MCF 10A (cell line): ENCODE measurements at regions of chr15 and their contacts with region 1.

Region 1: GRCh38 chr15:35000511-35000910 is 12.4 kb upstream of the ZNF770 start:
- DNase-seq: peak; percentile 99
- H3K4me3 Mint-ChIP-seq: peak overlapping the region; percentile 43
- H3K27ac Mint-ChIP-seq: peak overlapping the region; percentile 85
- H3K4me1 Mint-ChIP-seq: peaks cover 4% of the 10 kb centered on the region
- H3K27me3 Mint-ChIP-seq: no peaks in the 10 kb centered on the region
- CTCF ChIP-seq: no peak

Region 2: GRCh38 chr15:34969340-34970097 is 31.0 kb before region 1 on chr15 and contains the start of gene AQR:
- CTCF ChIA-PET with region 1: interaction called, 7 read pairs
- POLR2A ChIA-PET with region 1: interaction called, 14 read pairs
- intact Hi-C with region 1: no loop called
- DNase-seq: peak; percentile 97
- H3K4me3 Mint-ChIP-seq: peak within 1 kb of the TSS; percentile 99
- H3K27ac Mint-ChIP-seq: peak within 1 kb of the TSS; percentile 99
- H3K4me1 Mint-ChIP-seq: peaks cover 19% of the 10 kb centered on the region
- H3K27me3 Mint-ChIP-seq: no peaks in the 10 kb centered on the region
- CTCF ChIP-seq: no peak
- total RNA-seq, gene AQR: 26.5 and 33.1 TPM in 2 replicates

Region 3: DNA sequence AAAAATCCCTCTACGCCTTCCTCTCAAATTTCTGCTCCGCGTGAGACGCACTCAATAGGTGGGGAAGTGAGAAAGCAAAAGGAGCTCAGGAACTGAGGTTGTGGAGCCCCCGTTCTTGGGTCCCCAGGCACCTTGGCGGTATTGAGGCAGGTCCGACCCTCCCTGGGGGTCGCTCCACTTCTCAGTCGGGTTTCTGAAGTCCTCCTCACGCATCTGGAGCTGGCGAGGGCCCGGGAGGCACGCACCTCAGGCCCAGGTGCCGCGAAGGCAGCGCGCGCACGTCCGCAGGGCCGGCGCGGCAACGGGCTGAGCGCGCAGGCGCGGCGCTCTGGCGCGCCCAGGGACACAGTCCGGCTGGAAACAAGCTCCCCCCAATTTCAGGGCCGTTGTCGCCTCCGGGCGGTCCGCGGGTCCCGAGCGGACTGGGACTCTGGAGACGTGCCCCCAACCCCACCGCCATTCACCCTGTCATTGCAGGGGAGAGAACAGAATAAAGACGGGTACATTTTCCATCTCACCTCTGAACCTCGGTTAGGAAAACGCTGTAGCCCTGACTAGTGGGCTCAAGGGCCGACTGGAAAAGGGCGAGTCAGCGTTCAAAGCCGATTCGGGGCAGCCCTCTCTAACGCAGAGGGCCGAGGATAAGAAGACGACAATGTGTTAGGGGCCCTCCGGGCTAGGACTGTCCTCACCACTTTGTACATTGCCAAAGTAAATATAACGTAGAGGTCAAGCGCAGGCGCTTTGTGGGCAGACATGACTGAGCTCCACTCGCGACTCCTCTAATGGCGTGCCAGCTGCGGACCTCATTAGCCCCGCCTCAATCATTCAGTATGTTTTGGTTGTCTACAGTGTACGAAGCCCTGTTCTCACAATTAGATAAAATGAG is 12.3 kb before region 1 on chr15 and contains the start of gene ZNF770:
- CTCF ChIA-PET with region 1: interaction called, 4 read pairs
- POLR2A ChIA-PET with region 1: interaction called, 181 read pairs
- intact Hi-C with region 1: no loop called
- DNase-seq: peak; percentile 69
- H3K4me3 Mint-ChIP-seq: peak within 1 kb of the TSS; percentile 91
- H3K27ac Mint-ChIP-seq: peak within 1 kb of the TSS; percentile 98
- H3K4me1 Mint-ChIP-seq: peaks cover 12% of the 10 kb centered on the region
- H3K27me3 Mint-ChIP-seq: no peaks in the 10 kb centered on the region
- CTCF ChIP-seq: no peak
- total RNA-seq, gene ZNF770: 61.0 and 73.6 TPM in 2 replicates

Region 4: DNA sequence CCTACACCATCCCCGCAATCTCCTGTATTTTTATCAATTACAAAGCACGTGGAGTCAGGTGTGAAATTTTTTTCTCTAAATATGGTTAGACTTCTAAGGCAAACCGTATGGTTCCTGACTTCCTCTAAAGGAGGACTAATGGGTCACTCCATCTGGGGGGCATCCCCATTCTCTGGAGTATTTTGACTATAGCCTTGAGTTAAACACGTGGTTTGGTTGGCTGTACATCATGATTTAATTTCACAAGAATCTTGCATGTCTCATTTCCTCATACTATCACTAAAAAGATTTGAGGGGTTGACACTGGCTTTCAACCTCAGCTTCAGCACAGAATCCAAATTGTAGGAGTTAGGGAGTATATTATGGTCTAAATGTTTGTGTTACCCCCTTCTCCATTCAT is 12.9 kb after region 1 on chr15:
- CTCF ChIA-PET with region 1: interaction called, 12 read pairs
- POLR2A ChIA-PET with region 1: interaction called, 12 read pairs
- intact Hi-C with region 1: no loop called
- DNase-seq: no peak
- H3K4me3 Mint-ChIP-seq: no peak overlapping the region
- H3K27ac Mint-ChIP-seq: no peak overlapping the region
- H3K4me1 Mint-ChIP-seq: peaks cover 5% of the 10 kb centered on the region
- H3K27me3 Mint-ChIP-seq: no peaks in the 10 kb centered on the region
- CTCF ChIP-seq: no peak

Region 5: GRCh38 chr15:35019386-35020083 is 19.0 kb after region 1 on chr15:
- CTCF ChIA-PET with region 1: interaction called, 12 read pairs
- POLR2A ChIA-PET with region 1: interaction called, 12 read pairs
- intact Hi-C with region 1: no loop called
- DNase-seq: peak; percentile 70
- H3K4me3 Mint-ChIP-seq: peak overlapping the region; percentile 66
- H3K27ac Mint-ChIP-seq: peak overlapping the region; percentile 81
- H3K4me1 Mint-ChIP-seq: peaks cover 16% of the 10 kb centered on the region
- H3K27me3 Mint-ChIP-seq: no peaks in the 10 kb centered on the region
- CTCF ChIP-seq: no peak

Region 6: DNA sequence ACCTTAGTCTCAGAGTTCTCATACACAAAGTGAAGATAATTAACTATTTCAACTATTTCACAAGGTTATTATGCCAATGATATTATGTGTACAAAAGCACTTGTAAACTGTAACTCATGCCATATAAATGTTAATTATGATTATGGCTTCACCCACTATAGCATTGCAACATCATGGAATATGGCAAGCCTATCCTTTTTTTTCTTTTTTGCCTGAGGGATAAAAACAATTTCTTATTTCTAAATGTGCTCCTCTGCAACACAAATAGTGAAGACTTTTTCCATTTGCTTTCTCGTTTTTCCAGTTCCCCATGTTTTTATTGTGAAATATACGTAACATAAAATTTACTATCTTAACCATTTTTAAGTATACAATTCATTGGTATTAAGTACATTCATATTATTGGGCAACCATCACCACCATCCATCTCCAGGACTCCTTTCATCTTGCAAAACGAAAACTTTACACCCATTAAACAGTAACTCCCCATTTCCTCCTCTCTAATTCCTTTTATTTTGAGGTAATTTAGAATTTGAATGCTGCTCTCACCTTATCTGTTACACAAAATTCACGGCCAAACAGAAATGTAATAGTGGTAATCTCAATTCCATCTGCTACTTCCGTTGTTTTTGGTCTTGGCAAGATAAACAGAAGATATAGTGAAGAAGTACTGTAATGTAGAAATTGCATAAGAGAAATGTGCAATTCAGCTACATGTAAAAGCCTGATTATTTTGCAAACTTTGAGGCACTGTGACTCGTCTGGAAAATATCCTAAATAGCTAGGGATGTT is 38.3 kb after region 1 on chr15:
- CTCF ChIA-PET with region 1: interaction called, 3 read pairs
- POLR2A ChIA-PET with region 1: interaction called, 23 read pairs
- intact Hi-C with region 1: no loop called
- DNase-seq: peak; percentile 51
- H3K4me3 Mint-ChIP-seq: peak overlapping the region; percentile 40
- H3K27ac Mint-ChIP-seq: peak overlapping the region; percentile 55
- H3K4me1 Mint-ChIP-seq: peaks cover 16% of the 10 kb centered on the region
- H3K27me3 Mint-ChIP-seq: no peaks in the 10 kb centered on the region
- CTCF ChIP-seq: no peak